Testis (tissue), 5 donors: ENCODE measurements at regions of chr15 and their contacts with region 1.

Region 1: GRCh38 chr15:74127260-74127953 is 3.0 kb upstream of the ISLR2 start:
- DNase-seq: peak; percentile 93
- H3K4me3 ChIP-seq: peak overlapping the region; percentile 36 to 43
- H3K27ac ChIP-seq: peak overlapping the region in 1 of 2 donors; percentile 25
- H3K4me1 ChIP-seq: peaks cover 21% of the 10 kb centered on the region
- H3K27me3 ChIP-seq: no peaks in the 10 kb centered on the region
- CTCF ChIP-seq: peak; percentile 97 to 99 (median 99)
- POLR2A ChIP-seq: no peak

Region 2: DNA sequence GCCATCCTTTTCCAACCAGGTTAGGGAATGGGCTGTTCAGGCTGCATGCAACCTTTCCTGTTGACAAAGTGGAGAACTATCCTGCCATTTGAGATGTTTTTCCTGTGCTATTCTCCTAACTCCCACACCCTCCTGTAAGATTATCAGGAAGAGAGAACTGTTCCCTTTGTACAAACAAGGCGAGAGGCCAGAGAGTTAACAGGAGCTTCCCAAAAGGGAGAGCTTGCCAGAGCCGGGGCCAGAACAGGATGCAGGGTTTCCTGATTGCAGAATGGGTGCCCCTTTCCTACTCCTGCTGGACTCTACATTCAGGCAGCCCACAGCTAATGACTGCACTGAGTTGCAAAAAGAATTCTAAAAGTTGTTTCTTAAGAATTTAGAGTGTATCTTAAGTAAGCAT is 115.8 kb before region 1 on chr15:
- intact Hi-C with region 1: no loop called
- DNase-seq: peak; percentile 58
- H3K4me3 ChIP-seq: no peak overlapping the region
- H3K27ac ChIP-seq: peak overlapping the region in 1 of 2 donors; percentile 54
- H3K4me1 ChIP-seq: peaks cover 13% of the 10 kb centered on the region
- H3K27me3 ChIP-seq: no peaks in the 10 kb centered on the region
- CTCF ChIP-seq: no peak
- POLR2A ChIP-seq: no peak

Region 3: DNA sequence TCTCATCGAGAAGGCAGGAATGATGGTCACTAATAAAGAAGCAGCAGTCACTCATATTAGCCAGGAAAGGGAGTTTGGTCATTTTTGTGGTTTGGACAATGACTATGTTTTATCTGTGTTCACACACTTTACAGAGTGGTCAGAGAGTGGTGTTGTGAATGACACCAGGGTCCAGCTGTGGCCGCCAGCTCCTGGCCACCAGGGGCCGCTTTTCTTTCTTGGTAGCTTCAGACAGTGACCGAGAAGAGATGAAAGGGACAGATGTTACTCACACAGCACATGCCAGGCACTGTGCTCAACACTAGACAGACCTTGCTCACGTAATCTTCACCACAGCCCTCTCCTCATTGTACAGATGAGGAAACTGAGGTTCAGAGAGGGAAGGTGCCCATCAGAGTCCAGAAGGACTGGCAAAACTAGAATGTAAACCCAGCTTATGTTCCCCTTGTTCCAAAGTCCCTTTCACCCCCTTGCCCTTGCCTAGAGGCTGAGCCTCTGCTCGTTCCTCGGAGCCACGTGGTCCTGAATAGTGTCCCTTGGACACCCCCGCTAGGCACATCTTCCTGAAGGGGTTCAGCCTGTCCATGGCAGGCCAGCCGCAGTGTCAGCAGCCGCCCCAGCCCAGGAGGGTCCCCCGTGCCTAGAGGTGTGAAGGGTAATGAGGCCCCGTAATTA is 184.5 kb after region 1 on chr15:
- intact Hi-C with region 1: loop called (anchors 5 kb)
- DNase-seq: peak; percentile 27
- H3K4me3 ChIP-seq: no peak overlapping the region
- H3K27ac ChIP-seq: no peak overlapping the region
- H3K4me1 ChIP-seq: peaks cover 8% of the 10 kb centered on the region
- H3K27me3 ChIP-seq: no peaks in the 10 kb centered on the region
- CTCF ChIP-seq: no peak
- POLR2A ChIP-seq: no peak